BJ (cell line): ENCODE measurements at regions of chr11 and their contacts with region 1.

Region 1: DNA sequence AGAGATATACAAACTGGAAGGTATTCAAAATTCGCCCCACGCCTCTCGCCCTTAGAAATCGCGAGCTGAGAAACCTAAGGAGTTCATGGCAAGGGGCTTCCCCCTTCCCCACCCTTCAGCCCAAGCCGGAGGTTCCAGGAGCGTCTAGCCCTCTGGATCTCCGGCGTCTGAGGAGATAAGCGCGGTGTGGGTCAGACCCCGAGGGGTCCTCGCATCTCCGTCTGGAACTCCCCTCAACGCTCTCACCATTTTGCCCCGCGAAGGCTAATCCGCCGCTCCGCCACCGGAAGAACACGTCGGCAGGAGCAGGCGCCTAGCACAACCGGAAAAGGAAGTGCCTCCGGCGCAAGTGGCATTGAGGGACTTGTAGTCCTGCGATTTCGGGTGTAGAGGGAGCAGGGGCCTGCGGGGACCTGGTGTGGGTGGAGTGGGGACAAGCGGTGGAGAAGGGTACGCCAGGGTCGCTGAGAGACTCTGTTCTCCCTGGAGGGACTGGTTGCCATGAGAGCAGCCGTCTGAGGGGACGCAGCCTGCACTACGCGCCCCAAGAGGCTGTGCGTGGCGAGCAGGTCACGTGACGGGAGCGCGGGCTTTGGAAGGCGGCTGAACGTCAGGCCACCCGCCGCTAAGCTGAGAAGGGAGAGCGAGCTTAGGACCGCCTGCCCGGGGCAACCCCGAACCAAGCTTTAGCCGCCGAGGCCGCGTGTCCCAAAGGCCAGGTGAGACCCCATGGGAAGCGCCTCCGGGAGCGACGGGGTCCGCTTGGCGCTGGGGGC is at the starts of genes FEN1 and TMEM258:
- DNase-seq: peak; percentile 71
- H3K4me3 ChIP-seq: peak within 1 kb of the TSS; percentile 81
- H3K27me3 ChIP-seq: no peaks in the 10 kb centered on the region
- CTCF ChIP-seq: no peak
- polyA plus RNA-seq, gene FEN1: 11.7 and 13.2 TPM in 2 replicates
- polyA plus RNA-seq, gene TMEM258: 371 and 399 TPM in 2 replicates

Region 2: GRCh38 chr11:61747192-61747966 is 45.1 kb before region 1 on chr11:
- CTCF ChIA-PET with region 1: interaction called, 34 read pairs
- POLR2A ChIA-PET with region 1: no interaction called
- DNase-seq: no peak
- H3K4me3 ChIP-seq: no peak overlapping the region
- H3K27me3 ChIP-seq: no peaks in the 10 kb centered on the region
- CTCF ChIP-seq: peak; percentile 95

Region 3: GRCh38 chr11:61776551-61777075 is 15.9 kb before region 1 on chr11:
- CTCF ChIA-PET with region 1: interaction called, 10 read pairs
- POLR2A ChIA-PET with region 1: no interaction called
- DNase-seq: no peak
- H3K4me3 ChIP-seq: no peak overlapping the region
- H3K27me3 ChIP-seq: no peaks in the 10 kb centered on the region
- CTCF ChIP-seq: peak; percentile 87

Region 4: DNA sequence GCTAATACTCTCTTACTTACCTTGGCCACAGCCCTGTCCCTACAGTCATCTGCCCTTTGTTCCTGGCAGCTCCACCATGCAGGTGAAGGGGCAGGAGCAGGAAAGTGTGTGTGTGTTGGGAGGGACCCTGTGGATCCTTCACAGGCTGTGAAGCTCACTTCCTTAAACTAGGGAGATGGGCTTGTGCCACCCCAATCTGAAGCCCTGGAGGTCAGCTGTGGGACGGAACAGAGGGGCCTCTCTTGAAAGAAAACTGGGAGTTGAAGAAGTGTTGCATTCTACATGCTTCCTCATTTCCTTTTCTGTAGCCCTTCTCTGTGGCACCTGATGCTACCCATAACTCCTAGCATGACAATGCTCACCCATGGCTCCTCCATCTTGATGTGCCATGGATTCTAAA is 12.6 kb after region 1 on chr11:
- CTCF ChIA-PET with region 1: interaction called, 32 read pairs
- POLR2A ChIA-PET with region 1: no interaction called
- DNase-seq: no peak
- H3K4me3 ChIP-seq: no peak overlapping the region
- H3K27me3 ChIP-seq: no peaks in the 10 kb centered on the region
- CTCF ChIP-seq: no peak

Region 5: GRCh38 chr11:61816736-61817455 is 24.4 kb after region 1 on chr11 and contains the start of gene FADS1:
- CTCF ChIA-PET with region 1: interaction called, 19 read pairs
- POLR2A ChIA-PET with region 1: no interaction called
- DNase-seq: peak; percentile 45
- H3K4me3 ChIP-seq: peak within 1 kb of the TSS; percentile 65
- H3K27me3 ChIP-seq: no peaks in the 10 kb centered on the region
- CTCF ChIP-seq: peak; percentile 77
- polyA plus RNA-seq, gene FADS1: 48.1 and 58.0 TPM in 2 replicates

Region 6: DNA sequence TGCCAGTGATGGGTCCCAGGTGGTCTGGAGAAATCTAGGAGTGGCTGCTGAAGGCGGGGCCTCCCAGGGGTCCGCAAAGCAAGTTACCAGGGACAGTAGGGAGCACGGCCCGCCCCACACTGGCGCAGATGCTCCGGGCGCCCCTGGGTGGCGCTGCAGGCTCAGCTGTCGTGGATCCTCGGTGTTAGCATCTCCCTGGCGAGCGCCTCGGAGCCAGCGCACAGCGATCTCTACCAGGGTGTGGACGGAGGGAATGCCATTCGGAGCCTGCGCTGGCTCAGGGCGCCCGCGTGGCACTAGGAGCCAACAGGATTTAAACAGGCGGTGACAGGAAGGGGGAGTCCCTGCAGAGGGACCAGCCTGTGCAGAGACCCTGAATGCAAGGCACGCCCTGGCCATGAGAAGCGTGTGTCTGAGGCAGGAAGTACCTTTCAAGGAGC is 78.7 kb after region 1 on chr11:
- CTCF ChIA-PET with region 1: interaction called, 21 read pairs
- POLR2A ChIA-PET with region 1: no interaction called
- DNase-seq: no peak
- H3K4me3 ChIP-seq: no peak overlapping the region
- H3K27me3 ChIP-seq: no peaks in the 10 kb centered on the region
- CTCF ChIP-seq: peak; percentile 97

Region 7: GRCh38 chr11:61912530-61912898 is 120.0 kb after region 1 on chr11:
- CTCF ChIA-PET with region 1: no interaction called
- POLR2A ChIA-PET with region 1: no interaction called
- DNase-seq: no peak
- H3K4me3 ChIP-seq: no peak overlapping the region
- H3K27me3 ChIP-seq: no peaks in the 10 kb centered on the region
- CTCF ChIP-seq: no peak

Region 8: GRCh38 chr11:62108017-62108750 is 315.7 kb after region 1 on chr11:
- CTCF ChIA-PET with region 1: interaction called, 62 read pairs
- POLR2A ChIA-PET with region 1: no interaction called
- DNase-seq: no peak
- H3K4me3 ChIP-seq: no peak overlapping the region
- H3K27me3 ChIP-seq: no peaks in the 10 kb centered on the region
- CTCF ChIP-seq: peak; percentile 72